GM10248 (cell line): ENCODE measurements at regions of chr19 and their contacts with region 1.

Region 1: DNA sequence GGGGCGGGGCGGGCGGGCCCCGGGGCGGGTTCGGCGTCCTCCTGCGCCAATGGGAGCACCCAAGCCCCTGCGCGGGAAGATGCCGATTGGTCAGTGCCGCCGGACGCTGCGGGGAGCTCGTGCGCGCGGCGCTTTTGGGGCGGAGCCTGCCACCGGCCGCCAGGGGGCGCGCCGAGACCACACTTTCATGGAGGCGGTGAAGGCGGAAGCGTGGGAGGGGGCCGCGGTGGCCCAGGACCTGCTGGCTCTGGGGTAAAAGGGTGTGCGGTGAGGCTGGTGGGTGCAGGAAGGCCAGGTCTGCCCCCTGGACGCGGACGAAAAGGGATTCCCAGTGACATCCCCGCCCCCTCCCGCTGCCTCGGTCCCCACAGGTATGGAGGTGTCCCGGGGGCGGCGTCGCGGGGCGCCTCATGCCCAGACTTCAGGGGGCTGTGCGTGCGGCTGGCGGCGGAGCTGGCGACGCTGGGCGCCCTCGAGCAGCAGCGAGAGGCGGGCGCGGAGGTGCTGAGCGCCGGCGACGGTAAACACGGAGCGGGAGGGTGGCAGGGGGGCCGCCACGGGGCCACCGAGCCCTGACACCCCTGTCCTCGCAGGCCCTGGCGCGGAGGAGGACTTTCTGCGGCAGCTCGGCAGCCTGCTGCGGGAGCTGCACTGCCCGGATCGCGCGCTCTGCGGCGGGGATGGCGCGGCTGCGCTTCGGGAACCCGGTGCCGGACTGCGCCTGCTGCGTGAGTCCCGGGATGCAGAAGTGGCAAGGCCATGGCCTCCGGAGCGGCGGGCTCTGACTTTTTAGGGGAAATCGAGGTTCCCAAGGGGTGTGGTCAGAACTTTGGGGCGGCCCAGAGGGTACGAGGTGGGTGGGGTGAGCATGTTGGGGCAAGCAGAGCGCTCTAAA is at the start of gene FAM98C:
- DNase-seq: peak; percentile 100
- CTCF ChIP-seq: peak; percentile 97

Region 2: DNA sequence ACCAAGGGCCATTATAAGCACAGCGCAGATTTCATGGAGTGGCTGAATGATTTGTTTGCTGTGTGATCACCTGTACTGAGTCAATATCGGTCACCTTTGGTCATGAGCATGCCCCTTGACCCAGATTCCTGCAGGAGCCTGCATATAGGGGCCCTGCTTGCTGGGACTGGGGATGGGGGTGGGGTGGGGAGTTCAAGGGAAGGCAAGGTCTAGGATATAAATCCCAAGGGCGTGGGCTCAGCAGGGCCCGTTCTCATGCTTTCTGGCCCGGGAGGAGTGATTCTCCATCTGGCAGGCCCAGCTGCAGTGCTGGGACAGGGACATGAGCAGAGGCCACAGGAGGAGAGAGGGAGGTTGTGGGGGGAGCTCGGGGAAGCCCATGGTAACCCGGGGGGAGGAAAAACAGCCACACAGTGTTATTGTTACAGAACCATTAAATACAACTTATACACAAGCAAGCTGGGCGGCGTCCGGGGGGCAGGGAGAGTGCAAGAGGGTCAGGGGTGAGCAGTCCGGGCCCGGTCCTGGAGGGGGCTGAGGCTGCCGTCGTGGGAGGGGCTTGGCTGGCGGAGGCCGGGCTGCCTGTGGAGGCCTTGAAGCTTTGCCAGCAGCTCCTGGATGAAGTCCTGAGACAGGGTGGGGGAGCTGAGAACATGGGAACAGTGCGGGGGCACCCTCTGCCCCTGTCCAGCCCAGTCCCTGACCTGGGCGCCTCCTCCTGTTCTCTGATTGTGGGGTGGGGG is 152.2 kb before region 1 on chr19:
- CTCF ChIA-PET with region 1: no interaction called
- POLR2A ChIA-PET with region 1: no interaction called
- DNase-seq: no peak
- CTCF ChIP-seq: no peak

Region 3: DNA sequence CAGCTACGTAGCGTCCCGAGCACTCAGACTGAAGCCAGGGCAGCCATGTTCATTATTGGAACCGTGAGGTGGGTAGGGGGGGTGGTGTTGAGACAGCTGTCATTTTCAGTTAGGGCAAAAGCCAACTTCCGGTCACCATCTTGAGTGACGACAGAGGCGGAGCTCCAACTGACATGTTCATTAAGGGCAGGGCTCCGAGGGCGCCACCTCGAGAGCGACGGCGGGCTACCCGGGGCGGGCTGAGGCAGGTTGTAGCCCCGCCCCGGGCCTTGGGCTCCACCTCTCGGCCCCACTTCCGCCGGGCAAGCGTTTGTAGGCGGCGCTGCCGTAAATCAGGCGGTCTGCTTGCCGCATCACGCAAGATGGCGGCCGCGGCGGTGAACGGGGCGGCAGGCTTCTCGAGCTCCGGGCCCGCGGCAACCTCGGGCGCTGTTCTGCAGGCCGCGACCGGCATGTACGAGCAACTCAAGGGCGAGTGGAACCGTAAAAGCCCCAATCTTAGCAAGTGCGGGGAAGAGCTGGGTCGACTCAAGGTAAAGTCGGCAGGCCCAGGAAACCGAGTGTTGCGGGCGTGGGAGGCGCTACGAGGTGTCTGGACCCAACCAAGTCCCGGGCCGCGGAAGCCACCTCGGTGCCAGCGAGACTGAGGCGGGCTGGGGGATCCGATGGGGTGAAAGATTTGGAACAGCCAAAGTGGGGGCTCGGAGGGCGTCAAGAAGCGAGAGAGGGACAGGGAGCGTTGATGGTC is 28.6 kb before region 1 on chr19 and contains the start of gene PSMD8:
- CTCF ChIA-PET with region 1: interaction called, 12 read pairs
- POLR2A ChIA-PET with region 1: interaction called, 10 read pairs
- DNase-seq: peak; percentile 99
- CTCF ChIP-seq: peak; percentile 34

Region 4: DNA sequence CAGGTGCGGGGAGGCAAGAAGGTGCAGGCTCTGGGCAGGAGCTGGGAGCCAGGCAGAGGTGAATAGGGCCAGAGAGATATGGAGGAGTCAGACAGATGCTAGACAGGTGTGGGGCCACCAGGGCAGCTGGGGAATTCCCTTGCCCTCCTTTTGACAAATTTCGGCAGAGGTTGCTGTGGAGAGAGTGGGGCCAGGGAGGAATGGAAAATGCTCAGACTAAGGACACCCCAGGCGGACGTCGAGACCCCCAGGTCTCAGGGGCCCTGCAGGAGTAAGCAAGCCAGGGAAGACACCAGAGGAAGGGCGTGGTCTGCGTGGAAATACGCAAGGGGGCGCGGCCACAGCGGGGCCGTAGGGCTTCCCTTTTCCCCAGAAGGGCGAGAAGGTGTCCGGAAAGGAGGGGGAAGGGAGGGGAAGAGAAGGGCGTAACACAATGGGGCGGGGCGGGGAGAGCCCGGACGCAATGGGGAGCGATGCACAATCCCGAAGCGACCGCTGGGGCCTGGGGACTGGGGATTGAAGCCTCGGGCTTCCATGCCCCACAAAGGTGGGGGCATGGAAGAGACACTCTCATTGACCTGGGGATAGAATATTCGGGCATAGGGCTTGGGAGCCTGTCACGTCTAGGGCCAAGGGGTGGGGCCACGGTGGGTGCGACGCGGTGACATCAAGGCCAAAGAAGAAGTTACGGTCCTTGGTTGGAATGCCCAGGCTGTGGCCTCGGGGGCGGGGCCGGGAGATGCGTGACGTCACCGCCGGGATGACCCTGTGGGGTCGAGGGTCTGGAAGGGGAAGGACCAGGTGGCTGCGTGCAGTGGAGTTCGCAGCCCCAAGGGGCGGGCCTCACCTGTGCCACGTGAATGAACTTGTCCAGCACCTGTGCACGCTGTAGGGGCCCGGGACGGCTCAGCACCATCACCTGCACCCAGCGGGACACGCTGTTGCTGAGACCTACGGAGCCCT is 14.6 kb after region 1 on chr19:
- CTCF ChIA-PET with region 1: interaction called, 37 read pairs
- POLR2A ChIA-PET with region 1: no interaction called
- DNase-seq: peak; percentile 72
- CTCF ChIP-seq: no peak

Region 5: GRCh38 chr19:38443458-38443999 is 40.3 kb after region 1 on chr19:
- CTCF ChIA-PET with region 1: interaction called, 15 read pairs
- POLR2A ChIA-PET with region 1: no interaction called
- DNase-seq: no peak
- CTCF ChIP-seq: no peak

Region 6: GRCh38 chr19:38618590-38619360 is 215.6 kb after region 1 on chr19 and contains the start of gene EIF3K:
- CTCF ChIA-PET with region 1: interaction called, 13 read pairs
- POLR2A ChIA-PET with region 1: no interaction called
- DNase-seq: peak; percentile 99
- CTCF ChIP-seq: no peak

Region 7: GRCh38 chr19:38640368-38640767 is 237.2 kb after region 1 on chr19:
- CTCF ChIA-PET with region 1: interaction called, 11 read pairs
- POLR2A ChIA-PET with region 1: no interaction called
- DNase-seq: no peak
- CTCF ChIP-seq: no peak

Region 8: GRCh38 chr19:38952395-38953165 is 549.4 kb after region 1 on chr19:
- CTCF ChIA-PET with region 1: interaction called, 10 read pairs
- POLR2A ChIA-PET with region 1: no interaction called
- DNase-seq: peak; percentile 72
- CTCF ChIP-seq: peak; percentile 70